Heart left ventricle (tissue), 16 donors: ENCODE measurements at regions of chr3 and their contacts with region 1.

Region 1: GRCh38 chr3:143644370-143645089 is 203.7 kb downstream of the SLC9A9 start:
- DNase-seq: peak in 2 of 5 donors; percentile 26 to 35
- ATAC-seq: peak; percentile 75 to 87 (median 80)
- H3K4me3 ChIP-seq: no peak overlapping the region
- H3K27ac ChIP-seq: no peak overlapping the region
- H3K4me1 ChIP-seq: peaks cover 0 to 7% (median 0%) of the 10 kb centered on the region in 12 donors
- H3K27me3 ChIP-seq: no peaks in the 10 kb centered on the region
- CTCF ChIP-seq: peak; percentile 30 to 68 (median 55)
- POLR2A ChIP-seq: no peak

Region 2: DNA sequence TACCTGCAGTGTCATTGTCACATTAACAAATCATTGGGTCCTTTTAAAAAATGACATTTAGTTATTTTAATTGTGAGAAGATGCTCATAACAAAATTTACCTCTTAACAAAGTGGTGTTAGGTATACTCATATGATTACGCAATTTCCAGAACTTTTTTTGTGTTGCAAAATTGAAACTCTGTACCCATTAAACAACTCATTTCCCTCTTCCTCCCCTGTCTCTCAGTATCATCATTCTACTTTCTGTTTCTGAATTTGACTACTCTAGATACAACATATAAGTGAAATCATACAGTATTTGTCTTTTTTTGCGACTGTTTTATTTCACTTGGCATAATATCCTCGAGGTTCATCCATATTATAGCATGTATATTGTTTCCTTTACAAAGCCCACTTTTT is 583.6 kb before region 1 on chr3:
- intact Hi-C with region 1: loop called in 1 of 10 experiments (anchors 10 kb)
- DNase-seq: no peak
- ATAC-seq: no peak
- H3K4me3 ChIP-seq: no peak overlapping the region
- H3K27ac ChIP-seq: peak overlapping the region in 1 of 12 donors; percentile 38
- H3K4me1 ChIP-seq: no peaks in the 10 kb centered on the region
- H3K27me3 ChIP-seq: no peaks in the 10 kb centered on the region
- CTCF ChIP-seq: no peak
- POLR2A ChIP-seq: no peak

Region 3: GRCh38 chr3:143119009-143119914 is 525.3 kb before region 1 on chr3 and contains the start of gene CHST2:
- intact Hi-C with region 1: loop called in 3 of 10 experiments (anchors 2 to 10 kb)
- DNase-seq: peak; percentile 73 to 87 (median 75)
- ATAC-seq: peak; percentile 66 to 98 (median 94)
- H3K4me3 ChIP-seq: peak within 1 kb of the TSS; percentile 51 to 91 (median 72)
- H3K27ac ChIP-seq: peak within 1 kb of the TSS in 11 of 12 donors; percentile 43 to 82 (median 60)
- H3K4me1 ChIP-seq: peaks cover 0 to 37% (median 2%) of the 10 kb centered on the region in 12 donors
- H3K27me3 ChIP-seq: peaks cover 0 to 33% (median 9%) of the 10 kb centered on the region in 9 donors
- CTCF ChIP-seq: no peak
- POLR2A ChIP-seq: peak in 1 of 2 donors; percentile 51
- total RNA-seq, gene CHST2: 1.3 to 8.7 (median 2.4) TPM

Region 4: DNA sequence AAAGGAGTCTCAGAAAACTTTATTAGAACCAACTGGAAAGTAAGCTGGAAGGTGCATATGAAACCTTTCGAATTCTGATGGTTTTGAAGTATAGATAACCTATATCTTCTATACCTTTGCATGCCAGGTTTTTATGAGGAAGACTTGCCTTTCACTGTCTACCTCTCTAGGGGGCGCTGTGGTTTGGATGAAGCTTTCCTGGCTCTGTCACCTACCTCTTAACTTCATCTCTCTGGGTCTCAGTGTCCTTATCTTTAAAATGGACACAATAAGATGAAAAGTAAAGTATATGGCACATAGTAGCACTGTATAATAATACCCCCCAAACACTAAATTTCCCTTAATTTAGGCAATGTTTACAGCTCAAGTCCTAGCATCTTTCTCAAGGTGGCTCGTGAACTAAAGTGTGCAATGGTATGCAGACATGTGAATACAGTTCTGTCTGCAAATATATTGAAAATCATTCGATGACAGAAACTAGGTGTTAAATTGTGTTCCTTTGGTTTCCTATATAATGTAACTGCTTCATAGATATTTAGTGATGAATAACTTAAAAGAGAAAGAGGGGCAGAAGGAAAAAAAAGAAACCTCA is 210.6 kb before region 1 on chr3:
- intact Hi-C with region 1: loop called in 2 of 10 experiments (anchors 10 kb)
- DNase-seq: no peak
- ATAC-seq: no peak
- H3K4me3 ChIP-seq: no peak overlapping the region
- H3K27ac ChIP-seq: no peak overlapping the region
- H3K4me1 ChIP-seq: no peaks in the 10 kb centered on the region
- H3K27me3 ChIP-seq: no peaks in the 10 kb centered on the region
- CTCF ChIP-seq: peak in 8 of 12 donors; percentile 11 to 38 (median 30)
- POLR2A ChIP-seq: no peak

Region 5: GRCh38 chr3:143585720-143586456 is 58.6 kb before region 1 on chr3:
- intact Hi-C with region 1: no loop called
- DNase-seq: no peak
- ATAC-seq: peak in 1 of 4 donors; percentile 39
- H3K4me3 ChIP-seq: no peak overlapping the region
- H3K27ac ChIP-seq: peak overlapping the region in 2 of 12 donors; percentile 10 to 74
- H3K4me1 ChIP-seq: peaks cover 0 to 11% (median 0%) of the 10 kb centered on the region in 12 donors
- H3K27me3 ChIP-seq: no peaks in the 10 kb centered on the region
- CTCF ChIP-seq: no peak
- POLR2A ChIP-seq: no peak

Region 6: DNA sequence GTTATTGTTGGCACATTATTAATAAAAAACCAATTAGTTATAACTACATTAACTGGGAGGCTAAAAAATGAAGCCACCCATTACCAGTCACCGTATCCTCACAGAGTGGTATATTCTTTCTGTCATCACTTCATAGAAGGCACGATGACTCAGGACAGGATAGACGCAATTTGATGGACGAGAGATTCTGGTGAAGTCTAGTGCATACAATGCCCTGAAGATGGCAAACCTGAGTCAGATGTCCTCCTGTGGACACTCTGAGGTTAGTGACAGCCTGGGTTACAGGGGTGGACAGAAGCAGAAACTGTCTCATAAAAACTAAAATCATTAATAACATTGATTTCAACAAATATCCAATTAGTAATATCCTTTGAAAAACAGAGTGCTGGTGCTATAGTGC is 53.4 kb after region 1 on chr3:
- intact Hi-C with region 1: no loop called
- DNase-seq: no peak
- ATAC-seq: no peak
- H3K4me3 ChIP-seq: no peak overlapping the region
- H3K27ac ChIP-seq: no peak overlapping the region
- H3K4me1 ChIP-seq: peaks cover 0 to 7% (median 0%) of the 10 kb centered on the region in 12 donors
- H3K27me3 ChIP-seq: no peaks in the 10 kb centered on the region
- CTCF ChIP-seq: no peak
- POLR2A ChIP-seq: no peak